Pancreas (tissue), 10 donors: ENCODE measurements at regions of chr14 and their contacts with region 1.

Region 1: DNA sequence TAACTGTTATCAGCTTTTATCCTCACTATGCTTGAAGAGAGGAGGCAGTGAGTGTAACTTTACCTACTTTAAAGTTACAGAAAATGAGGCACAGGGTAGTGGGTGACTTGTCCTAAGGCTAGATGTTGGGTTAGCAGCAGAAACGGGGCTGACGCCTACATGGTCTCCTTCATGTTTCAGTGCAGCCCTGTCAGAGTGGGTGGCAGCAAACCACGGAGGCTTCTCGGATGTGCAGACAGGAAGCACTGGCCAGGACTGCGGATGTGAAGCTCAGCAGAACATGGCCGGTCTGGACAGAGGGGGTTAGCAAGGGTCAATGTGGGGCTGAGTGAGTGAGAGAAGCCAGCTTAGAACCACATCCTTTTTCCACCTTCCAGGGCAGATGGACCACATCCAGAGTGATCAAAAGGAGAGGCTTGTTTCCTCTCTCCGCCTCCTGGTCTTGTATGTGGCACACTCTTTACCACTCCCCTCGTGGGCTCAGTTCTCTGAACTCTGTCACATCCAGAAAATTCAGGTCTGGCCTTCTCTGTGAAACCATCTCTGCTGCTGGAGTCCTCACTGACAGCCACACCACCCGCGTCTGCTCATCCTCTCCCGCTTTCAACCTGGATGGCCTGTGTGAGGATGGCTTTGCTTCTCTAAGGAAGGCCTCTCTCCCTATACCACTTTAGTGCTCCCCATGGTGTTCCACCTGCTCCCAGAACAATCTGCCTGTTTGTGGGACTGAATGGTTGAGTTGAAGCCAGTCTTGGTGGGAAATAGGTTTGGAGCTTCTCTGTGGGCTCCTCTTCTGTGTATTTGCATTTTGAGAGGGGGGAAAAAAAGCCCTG is 14.1 kb downstream of the SUSD6 start:
- DNase-seq: peak in 2 of 6 donors; percentile 28 to 55
- ATAC-seq: peak; percentile 28 to 82 (median 66)
- H3K4me3 ChIP-seq: no peak overlapping the region
- H3K27ac ChIP-seq: peak overlapping the region in 2 of 4 donors; percentile 38 to 57
- H3K4me1 ChIP-seq: peaks cover 8 to 53% (median 19%) of the 10 kb centered on the region in 3 donors
- H3K27me3 ChIP-seq: no peaks in the 10 kb centered on the region
- CTCF ChIP-seq: no peak

Region 2: GRCh38 chr14:69673578-69674305 is 48.2 kb after region 1 on chr14:
- intact Hi-C with region 1: loop called in 1 of 3 experiments (anchors 10 kb)
- DNase-seq: no peak
- ATAC-seq: peak; percentile 55 to 72 (median 70)
- H3K4me3 ChIP-seq: no peak overlapping the region
- H3K27ac ChIP-seq: peak overlapping the region; percentile 24 to 82 (median 66)
- H3K4me1 ChIP-seq: peaks cover 7 to 53% (median 34%) of the 10 kb centered on the region in 3 donors
- H3K27me3 ChIP-seq: no peaks in the 10 kb centered on the region
- CTCF ChIP-seq: no peak